Activated CD4-positive, alpha-beta T cell treated with anti-CD3 and anti-CD28 coated beads, Interleukin-2, amount 10 ng/mL, durations not matched to agents 24 days and 14 days (primary cell): ENCODE measurements at regions of chr7 and their contacts with region 1.

Region 1: GRCh38 chr7:43590862-43591550 is 8.1 kb downstream of the STK17A start:
- DNase-seq: peak; percentile 73
- H3K4me3 Mint-ChIP-seq: peak overlapping the region; percentile 55
- H3K27ac Mint-ChIP-seq: peak overlapping the region; percentile 80
- H3K4me1 Mint-ChIP-seq: peaks cover 72% of the 10 kb centered on the region
- H3K27me3 Mint-ChIP-seq: no peaks in the 10 kb centered on the region

Region 2: DNA sequence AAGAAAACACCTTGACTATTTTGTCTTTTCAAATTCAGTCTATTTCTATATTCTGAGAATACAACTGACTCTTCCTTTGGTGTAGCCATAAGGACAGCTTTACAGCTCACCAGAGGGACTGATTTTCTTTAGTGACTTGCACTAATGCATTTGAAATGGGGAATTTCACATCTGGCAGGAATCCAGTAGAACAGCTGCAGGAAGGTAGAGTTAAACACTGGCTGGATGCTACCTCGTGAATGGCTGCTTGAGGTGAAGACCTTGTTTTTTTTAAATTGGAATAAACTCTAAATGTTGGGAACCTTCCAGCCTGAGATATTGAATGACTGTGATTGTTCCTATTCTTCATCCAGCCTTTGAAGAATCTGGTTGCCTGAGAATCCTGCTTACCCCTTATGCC is 147.6 kb before region 1 on chr7:
- intact Hi-C with region 1: no loop called
- DNase-seq: no peak
- H3K4me3 Mint-ChIP-seq: no peak overlapping the region
- H3K27ac Mint-ChIP-seq: no peak overlapping the region
- H3K4me1 Mint-ChIP-seq: no peaks in the 10 kb centered on the region
- H3K27me3 Mint-ChIP-seq: peaks cover 5% of the 10 kb centered on the region

Region 3: GRCh38 chr7:43531700-43532099 is 59.3 kb before region 1 on chr7:
- intact Hi-C with region 1: no loop called
- DNase-seq: no peak
- H3K4me3 Mint-ChIP-seq: no peak overlapping the region
- H3K27ac Mint-ChIP-seq: no peak overlapping the region
- H3K4me1 Mint-ChIP-seq: no peaks in the 10 kb centered on the region
- H3K27me3 Mint-ChIP-seq: peaks cover 12% of the 10 kb centered on the region

Region 4: GRCh38 chr7:43612599-43613589 is 21.9 kb after region 1 on chr7:
- intact Hi-C with region 1: loop called (anchors 1 kb)
- DNase-seq: peak; percentile 59
- H3K4me3 Mint-ChIP-seq: peak overlapping the region; percentile 29
- H3K27ac Mint-ChIP-seq: peak overlapping the region; percentile 74
- H3K4me1 Mint-ChIP-seq: peaks cover 39% of the 10 kb centered on the region
- H3K27me3 Mint-ChIP-seq: no peaks in the 10 kb centered on the region

Region 5: DNA sequence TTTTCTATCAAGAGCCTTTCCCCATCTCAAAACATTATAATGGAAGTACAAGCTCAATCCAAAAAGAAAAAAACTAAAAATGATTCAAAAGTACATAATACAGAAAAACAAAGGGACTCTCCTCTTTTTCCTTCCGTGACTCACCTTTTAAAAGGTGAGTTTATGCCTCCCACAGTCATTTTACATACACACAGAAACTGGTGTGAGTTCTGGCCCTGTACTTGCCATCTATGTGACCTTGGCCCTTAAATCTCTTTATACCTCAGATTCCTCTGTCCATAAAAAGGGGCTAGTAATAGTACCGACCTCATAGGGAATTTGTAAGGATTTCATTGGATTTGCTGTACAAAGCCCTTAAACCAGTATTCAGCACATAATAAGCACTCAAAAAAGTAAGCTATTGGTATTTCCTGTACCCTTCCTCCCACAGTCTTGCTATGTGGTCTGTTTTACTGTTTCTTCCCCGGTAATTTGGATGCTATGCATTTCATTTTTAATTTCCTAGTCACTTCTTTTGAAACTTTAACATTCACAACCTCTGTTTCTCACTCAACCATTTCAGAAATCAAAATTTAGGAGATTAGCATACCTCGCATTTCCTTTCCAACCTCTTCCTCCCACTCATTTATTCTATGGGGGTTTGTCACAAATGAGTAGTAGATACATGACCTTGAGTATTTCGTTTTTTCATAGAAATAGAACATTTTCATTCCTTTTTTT is 30.9 kb after region 1 on chr7:
- intact Hi-C with region 1: loop called (anchors 1 kb)
- DNase-seq: no peak
- H3K4me3 Mint-ChIP-seq: peak overlapping the region; percentile 59
- H3K27ac Mint-ChIP-seq: peak overlapping the region; percentile 61
- H3K4me1 Mint-ChIP-seq: peaks cover 45% of the 10 kb centered on the region
- H3K27me3 Mint-ChIP-seq: no peaks in the 10 kb centered on the region

Region 6: DNA sequence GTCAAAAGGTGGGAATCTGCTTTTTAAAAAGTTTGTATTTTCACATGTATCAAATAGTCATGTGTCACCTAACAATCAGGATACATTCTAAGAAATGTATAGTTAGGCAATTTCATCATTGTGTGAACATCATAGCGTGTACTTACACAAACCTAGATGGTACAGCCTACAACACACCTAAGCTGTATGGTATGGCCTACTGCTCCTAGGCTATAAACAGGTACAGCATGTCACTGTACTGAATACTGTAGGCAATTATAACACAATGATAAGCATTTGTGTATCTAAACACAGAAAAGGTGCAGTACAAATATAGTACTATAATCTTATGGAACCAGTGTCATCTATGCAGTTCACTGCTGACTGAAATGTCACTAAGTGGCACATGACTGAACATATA is 120.5 kb after region 1 on chr7:
- intact Hi-C with region 1: no loop called
- DNase-seq: no peak
- H3K4me3 Mint-ChIP-seq: no peak overlapping the region
- H3K27ac Mint-ChIP-seq: no peak overlapping the region
- H3K4me1 Mint-ChIP-seq: peaks cover 9% of the 10 kb centered on the region
- H3K27me3 Mint-ChIP-seq: no peaks in the 10 kb centered on the region